Esophagus squamous epithelium (tissue), 5 donors: ENCODE measurements at regions of chr1 and their contacts with region 1.

Region 1: GRCh38 chr1:234722904-234723720 is 113.1 kb upstream of the IRF2BP2 start:
- DNase-seq: peak; percentile 31
- H3K4me3 ChIP-seq: peak overlapping the region in 3 of 4 donors; percentile 12 to 53 (median 20)
- H3K27ac ChIP-seq: peak overlapping the region; percentile 94 to 98 (median 96)
- H3K4me1 ChIP-seq: peaks cover 73 to 97% (median 84%) of the 10 kb centered on the region in 3 donors
- H3K27me3 ChIP-seq: no peaks in the 10 kb centered on the region
- CTCF ChIP-seq: no peak
- POLR2A ChIP-seq: no peak

Region 2: DNA sequence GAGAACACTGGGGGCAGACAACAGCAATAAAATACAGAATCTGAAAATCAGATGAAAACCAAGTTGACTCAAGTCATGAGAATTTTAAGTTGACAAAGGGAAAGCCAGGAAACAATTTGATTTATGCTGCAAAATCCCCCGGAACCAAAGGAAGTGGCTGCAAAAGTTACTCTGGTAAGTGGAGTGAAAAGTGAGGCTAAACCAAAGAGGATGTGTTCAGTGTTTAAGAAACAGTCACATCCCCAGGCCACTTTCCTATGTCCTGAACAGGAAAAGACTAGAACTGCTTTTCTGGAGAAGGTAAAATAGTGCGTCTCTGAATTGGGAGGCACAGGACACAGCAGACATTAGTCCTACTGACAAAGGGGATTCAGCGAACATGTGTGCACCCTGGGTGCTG is 250.0 kb before region 1 on chr1:
- intact Hi-C with region 1: no loop called
- DNase-seq: no peak
- H3K4me3 ChIP-seq: no peak overlapping the region
- H3K27ac ChIP-seq: no peak overlapping the region
- H3K4me1 ChIP-seq: peaks cover 0 to 25% (median 0%) of the 10 kb centered on the region in 3 donors
- H3K27me3 ChIP-seq: no peaks in the 10 kb centered on the region
- CTCF ChIP-seq: no peak
- POLR2A ChIP-seq: no peak

Region 3: GRCh38 chr1:234533975-234534876 is 188.9 kb before region 1 on chr1:
- intact Hi-C with region 1: loop called (anchors 5 kb)
- DNase-seq: no peak
- H3K4me3 ChIP-seq: peak overlapping the region in 1 of 4 donors; percentile 20
- H3K27ac ChIP-seq: peak overlapping the region; percentile 87 to 99 (median 97)
- H3K4me1 ChIP-seq: peaks cover 83 to 100% (median 94%) of the 10 kb centered on the region in 3 donors
- H3K27me3 ChIP-seq: no peaks in the 10 kb centered on the region
- CTCF ChIP-seq: no peak
- POLR2A ChIP-seq: no peak

Region 4: GRCh38 chr1:234610348-234611152 is 112.6 kb before region 1 on chr1:
- intact Hi-C with region 1: loop called (anchors 5 kb)
- DNase-seq: peak; percentile 68
- H3K4me3 ChIP-seq: peak overlapping the region; percentile 50 to 90 (median 66)
- H3K27ac ChIP-seq: peak overlapping the region; percentile 99 to 100 (median 100)
- H3K4me1 ChIP-seq: peaks cover 30 to 63% (median 34%) of the 10 kb centered on the region in 3 donors
- H3K27me3 ChIP-seq: no peaks in the 10 kb centered on the region
- CTCF ChIP-seq: peak in 3 of 6 experiments; percentile 6 to 30 (median 28)
- POLR2A ChIP-seq: peak in 3 of 4 donors; percentile 98 to 99 (median 98)

Region 5: GRCh38 chr1:234978397-234979295 is 255.5 kb after region 1 on chr1:
- intact Hi-C with region 1: loop called (anchors 10 kb)
- DNase-seq: no peak
- H3K4me3 ChIP-seq: no peak overlapping the region
- H3K27ac ChIP-seq: peak overlapping the region; percentile 85 to 97 (median 89)
- H3K4me1 ChIP-seq: peaks cover 41 to 75% (median 60%) of the 10 kb centered on the region in 3 donors
- H3K27me3 ChIP-seq: no peaks in the 10 kb centered on the region
- CTCF ChIP-seq: peak in 2 of 6 experiments; percentile 4 to 7
- POLR2A ChIP-seq: peak in 1 of 4 donors; percentile 32

Region 6: GRCh38 chr1:235075188-235075926 is 352.2 kb after region 1 on chr1:
- intact Hi-C with region 1: loop called (anchors 10 kb)
- DNase-seq: no peak
- H3K4me3 ChIP-seq: peak overlapping the region in 1 of 4 donors; percentile 42
- H3K27ac ChIP-seq: peak overlapping the region; percentile 88 to 94 (median 92)
- H3K4me1 ChIP-seq: peaks cover 48 to 85% (median 57%) of the 10 kb centered on the region in 3 donors
- H3K27me3 ChIP-seq: no peaks in the 10 kb centered on the region
- CTCF ChIP-seq: no peak
- POLR2A ChIP-seq: no peak